Naive thymus-derived CD4-positive, alpha-beta T cell (primary cell): ENCODE measurements at regions of chr4 and their contacts with region 1.

Region 1: DNA sequence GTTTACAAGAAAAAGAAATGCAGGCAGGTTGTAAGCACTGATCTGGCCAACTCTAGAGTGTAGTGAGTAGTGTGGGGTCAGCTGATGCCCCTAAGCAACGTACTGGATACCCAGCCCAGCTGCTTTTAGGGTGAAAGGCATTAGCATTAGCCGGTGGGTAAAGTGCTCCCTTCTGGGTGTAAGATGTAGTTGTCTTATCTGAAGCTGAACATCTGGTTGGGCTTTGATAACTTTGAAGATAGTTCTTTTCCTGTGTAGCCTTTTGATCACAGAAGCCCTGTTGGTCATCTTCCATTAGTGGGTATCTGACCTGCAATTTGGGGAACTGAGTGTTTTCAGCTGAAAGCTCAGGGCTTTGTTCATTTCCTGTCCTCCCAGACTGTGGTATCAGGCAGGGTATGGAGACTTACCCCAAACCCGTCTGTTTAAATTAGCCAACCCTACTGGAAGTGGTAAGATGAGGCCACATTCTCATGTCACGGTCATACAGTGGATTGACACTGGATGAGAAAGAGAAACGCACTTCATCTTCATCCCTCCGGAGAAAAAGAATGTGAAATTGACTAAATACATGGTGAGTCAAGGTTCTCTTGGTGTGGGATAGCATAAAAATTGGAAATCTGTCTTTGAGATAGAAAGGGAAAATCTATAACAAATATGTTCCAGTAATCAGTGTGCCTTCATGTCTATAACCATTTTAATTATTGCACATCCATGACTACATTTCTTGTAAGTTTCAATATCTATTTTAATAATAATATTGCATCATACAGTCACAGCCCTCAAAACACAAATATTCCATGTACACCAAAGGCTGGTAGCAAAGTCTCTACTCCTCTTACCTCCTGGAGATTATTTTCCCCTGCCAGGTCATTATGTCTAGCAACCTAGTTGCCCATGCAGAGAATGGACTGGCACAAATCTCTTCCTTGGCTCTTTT is 8.7 kb downstream of the RHOH start:
- DNase-seq: peak in 1 of 9 donors; percentile 44
- ATAC-seq: peak; percentile 66
- H3K4me3 ChIP-seq: peak overlapping the region; percentile 63
- H3K4me3 Mint-ChIP-seq: peak overlapping the region; percentile 91 to 100 (median 98)
- H3K27ac ChIP-seq: peak overlapping the region; percentile 100
- H3K27ac Mint-ChIP-seq: peak overlapping the region; percentile 94 to 100 (median 98)
- H3K4me1 ChIP-seq: peaks cover 24 to 40% of the 10 kb centered on the region in 2 donors
- H3K4me1 Mint-ChIP-seq: peaks cover 55 to 78% (median 67%) of the 10 kb centered on the region in 7 donors
- H3K27me3 ChIP-seq: no peaks in the 10 kb centered on the region
- H3K27me3 Mint-ChIP-seq: no peaks in the 10 kb centered on the region

Region 2: DNA sequence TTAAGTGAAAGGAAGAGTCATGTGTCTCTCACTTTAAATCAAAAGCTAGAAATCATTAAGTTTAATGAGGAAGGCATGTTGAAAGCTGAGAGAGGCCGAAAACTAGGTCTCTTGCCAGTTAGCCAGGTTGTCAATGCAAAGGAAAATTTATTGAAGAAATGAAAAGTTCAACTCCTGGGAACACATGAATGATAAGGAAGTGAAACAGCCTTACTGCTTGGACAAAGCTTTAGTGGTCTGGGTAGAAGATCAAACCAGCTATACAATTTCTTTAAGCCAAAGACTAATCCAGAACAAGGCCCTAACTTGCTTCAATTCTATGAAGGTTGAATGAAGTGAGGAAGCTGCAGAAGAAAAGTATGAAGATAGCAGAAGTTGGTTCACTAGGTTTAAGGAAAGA is 16.2 kb after region 1 on chr4:
- CTCF ChIA-PET with region 1: interaction called, 5 read pairs
- POLR2A ChIA-PET with region 1: interaction called, 90 read pairs
- intact Hi-C with region 1: no loop called
- DNase-seq: no peak
- ATAC-seq: no peak
- H3K4me3 ChIP-seq: no peak overlapping the region
- H3K4me3 Mint-ChIP-seq: peak overlapping the region; percentile 45 to 99 (median 62)
- H3K27ac ChIP-seq: peak overlapping the region; percentile 51
- H3K27ac Mint-ChIP-seq: peak overlapping the region; percentile 65 to 99 (median 91)
- H3K4me1 ChIP-seq: peaks cover 91 to 94% of the 10 kb centered on the region in 2 donors
- H3K4me1 Mint-ChIP-seq: peaks cover 60 to 98% (median 90%) of the 10 kb centered on the region in 7 donors
- H3K27me3 ChIP-seq: no peaks in the 10 kb centered on the region
- H3K27me3 Mint-ChIP-seq: no peaks in the 10 kb centered on the region

Region 3: GRCh38 chr4:40238700-40239548 is 33.4 kb after region 1 on chr4:
- CTCF ChIA-PET with region 1: interaction called, 4 read pairs
- POLR2A ChIA-PET with region 1: interaction called, 30 read pairs
- intact Hi-C with region 1: loop called in 1 of 2 experiments (anchors 2 kb)
- DNase-seq: peak in 8 of 9 donors; percentile 54 to 90 (median 75)
- ATAC-seq: peak; percentile 94
- H3K4me3 ChIP-seq: peak overlapping the region; percentile 49
- H3K4me3 Mint-ChIP-seq: peak overlapping the region; percentile 64 to 87 (median 79)
- H3K27ac ChIP-seq: peak overlapping the region; percentile 79
- H3K27ac Mint-ChIP-seq: peak overlapping the region; percentile 89 to 98 (median 94)
- H3K4me1 ChIP-seq: peaks cover 81 to 90% of the 10 kb centered on the region in 2 donors
- H3K4me1 Mint-ChIP-seq: peaks cover 54 to 97% (median 94%) of the 10 kb centered on the region in 7 donors
- H3K27me3 ChIP-seq: no peaks in the 10 kb centered on the region
- H3K27me3 Mint-ChIP-seq: no peaks in the 10 kb centered on the region

Region 4: DNA sequence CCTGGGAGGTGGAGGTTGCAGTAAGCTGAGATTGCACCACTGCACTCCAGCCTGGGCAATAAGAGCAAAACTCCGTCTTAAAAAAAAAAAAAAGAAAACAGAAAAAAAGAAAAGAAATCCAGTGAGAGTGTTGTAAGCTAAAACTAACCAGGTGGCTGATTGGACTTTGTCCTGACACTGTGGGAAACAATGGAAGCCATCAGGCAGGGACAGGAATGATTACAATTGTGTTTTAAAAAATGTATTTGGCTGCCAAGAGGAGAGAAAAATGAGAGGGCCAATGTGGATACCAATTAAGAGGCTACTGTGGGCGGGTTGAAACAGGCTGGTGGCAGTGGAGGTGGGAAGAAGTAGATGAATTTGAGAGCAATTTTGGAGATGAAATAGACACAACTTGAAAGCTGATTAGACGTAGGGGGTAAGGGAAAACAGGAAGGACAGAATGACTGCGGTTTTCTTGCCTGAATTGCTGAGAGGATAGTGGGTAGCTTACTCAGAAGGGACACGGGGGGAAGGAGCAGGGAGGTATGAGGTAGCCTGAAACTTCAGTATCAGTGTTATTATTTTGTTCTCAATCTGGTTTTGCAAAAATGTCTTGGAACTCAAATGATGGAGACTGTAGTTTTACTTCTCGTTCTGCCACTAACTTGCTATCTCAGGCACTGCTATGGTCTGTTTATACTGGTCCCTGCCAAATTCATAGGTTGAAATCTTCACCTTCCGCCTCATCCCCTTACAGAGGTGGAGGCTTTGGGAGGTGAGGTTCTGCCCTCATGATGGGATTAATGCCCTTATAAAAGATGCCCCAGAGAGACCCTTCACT is 84.0 kb after region 1 on chr4:
- CTCF ChIA-PET with region 1: no interaction called
- POLR2A ChIA-PET with region 1: interaction called, 11 read pairs
- intact Hi-C with region 1: no loop called
- DNase-seq: peak in 8 of 9 donors; percentile 38 to 75 (median 64)
- ATAC-seq: peak; percentile 89
- H3K4me3 ChIP-seq: peak overlapping the region; percentile 3
- H3K4me3 Mint-ChIP-seq: peak overlapping the region; percentile 35 to 88 (median 70)
- H3K27ac ChIP-seq: peak overlapping the region; percentile 65
- H3K27ac Mint-ChIP-seq: peak overlapping the region in 8 of 9 donors; percentile 83 to 96 (median 92)
- H3K4me1 ChIP-seq: peaks cover 18 to 45% of the 10 kb centered on the region in 2 donors
- H3K4me1 Mint-ChIP-seq: peaks cover 40 to 84% (median 67%) of the 10 kb centered on the region in 7 donors
- H3K27me3 ChIP-seq: no peaks in the 10 kb centered on the region
- H3K27me3 Mint-ChIP-seq: no peaks in the 10 kb centered on the region

Region 5: DNA sequence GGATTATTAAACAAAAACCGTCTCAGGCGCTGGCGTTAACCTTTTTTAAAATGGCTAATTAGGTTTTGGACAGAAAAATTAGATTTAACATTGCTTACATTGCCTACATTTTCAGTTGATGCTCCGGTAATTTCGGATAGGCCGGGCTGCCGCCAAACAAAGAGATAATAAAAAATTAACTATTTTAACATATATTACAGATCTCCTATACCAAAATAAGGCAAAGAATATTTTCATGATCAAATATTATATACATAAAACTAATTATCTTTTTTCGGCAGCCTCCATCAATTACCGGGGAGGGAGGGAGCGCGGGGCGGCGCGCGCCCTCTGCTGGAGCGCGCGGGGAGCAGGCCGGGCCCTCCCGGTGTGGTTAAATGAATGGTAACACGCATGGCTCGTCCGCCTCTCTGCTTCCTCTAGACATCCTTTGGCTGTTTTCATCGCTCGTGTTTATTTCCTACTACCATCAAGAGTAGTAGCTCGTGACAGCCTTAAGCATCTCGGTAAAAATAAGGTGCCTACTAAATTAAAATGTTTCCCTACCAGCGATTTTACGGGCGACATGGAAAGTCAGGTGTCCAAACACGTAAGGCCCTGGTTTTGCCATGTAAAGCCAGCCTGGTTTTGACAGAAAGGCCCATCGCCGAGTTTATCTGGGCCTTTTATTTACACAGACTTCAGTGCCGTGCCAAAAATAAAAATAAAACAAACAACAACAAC is 1677.3 kb after region 1 on chr4:
- CTCF ChIA-PET with region 1: no interaction called
- POLR2A ChIA-PET with region 1: no interaction called
- intact Hi-C with region 1: no loop called
- DNase-seq: peak in 7 of 9 donors; percentile 36 to 60 (median 45)
- ATAC-seq: peak; percentile 85
- H3K4me3 ChIP-seq: peak overlapping the region; percentile 55
- H3K4me3 Mint-ChIP-seq: peak overlapping the region in 9 of 10 donors; percentile 56 to 82 (median 76)
- H3K27ac ChIP-seq: no peak overlapping the region
- H3K27ac Mint-ChIP-seq: no peak overlapping the region
- H3K4me1 ChIP-seq: peaks cover 0 to 14% of the 10 kb centered on the region in 2 donors
- H3K4me1 Mint-ChIP-seq: peaks cover 2 to 33% (median 20%) of the 10 kb centered on the region in 7 donors
- H3K27me3 ChIP-seq: peaks cover 0 to 27% of the 10 kb centered on the region in 2 donors
- H3K27me3 Mint-ChIP-seq: peaks cover 42 to 87% (median 57%) of the 10 kb centered on the region in 5 donors